Head of caudate nucleus (tissue), 42 donors: ENCODE measurements at regions of chr10 and their contacts with region 1.

Region 1: GRCh38 chr10:97553575-97554031 is 19.0 kb upstream of the ANKRD2 start:
- DNase-seq: peak; percentile 49 to 89 (median 78)

Region 2: GRCh38 chr10:97445722-97446639 is 107.6 kb before region 1 on chr10 and contains the starts of genes EXOSC1 and ZDHHC16:
- intact Hi-C with region 1: loop called (anchors 5 kb)
- DNase-seq: peak; percentile 89 to 98 (median 96)

Region 3: DNA sequence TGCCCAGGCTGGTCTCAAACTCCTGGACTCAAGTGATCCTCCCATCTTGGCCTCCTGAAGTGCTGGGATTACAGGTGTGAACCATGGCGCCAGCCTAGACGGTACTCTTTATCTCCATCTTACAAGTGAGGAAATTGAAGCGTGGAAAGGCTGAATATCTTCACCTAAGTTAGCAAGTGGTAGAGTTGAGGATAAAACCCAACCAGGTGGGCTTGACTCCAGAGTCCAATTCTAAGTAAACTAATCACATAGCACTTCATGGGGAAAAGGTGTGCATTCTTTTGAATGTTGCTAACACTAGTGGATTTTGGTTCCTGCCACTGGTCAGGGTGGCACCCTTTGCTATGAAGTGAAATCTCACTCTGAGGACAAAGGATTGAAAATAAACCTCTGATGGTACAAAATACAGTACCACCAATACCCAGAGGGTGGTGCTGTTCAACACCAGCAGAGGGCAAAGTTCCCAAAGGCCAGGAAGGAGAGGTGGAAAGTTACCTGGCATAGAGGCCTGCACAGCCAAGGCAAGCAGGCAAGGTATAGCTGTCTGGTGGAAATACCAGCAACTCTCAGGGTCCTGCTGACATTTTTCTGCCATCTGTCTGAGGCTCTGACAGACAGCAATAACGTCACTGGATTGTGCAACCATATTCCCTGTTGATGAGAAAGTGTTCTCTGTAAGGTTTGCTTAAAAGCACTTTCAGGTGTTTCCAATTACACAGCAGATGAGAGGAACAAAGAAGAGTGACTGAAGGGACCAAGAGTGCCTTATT is 90.1 kb before region 1 on chr10:
- intact Hi-C with region 1: loop called (anchors 5 kb)
- DNase-seq: peak in 33 of 42 donors; percentile 13 to 82 (median 51)

Region 4: GRCh38 chr10:97499561-97500296 is 53.9 kb before region 1 on chr10:
- intact Hi-C with region 1: loop called (anchors 5 kb)
- DNase-seq: peak in 41 of 42 donors; percentile 25 to 78 (median 52)

Region 5: GRCh38 chr10:97518301-97519043 is 35.1 kb before region 1 on chr10:
- intact Hi-C with region 1: no loop called
- DNase-seq: no peak

Region 6: DNA sequence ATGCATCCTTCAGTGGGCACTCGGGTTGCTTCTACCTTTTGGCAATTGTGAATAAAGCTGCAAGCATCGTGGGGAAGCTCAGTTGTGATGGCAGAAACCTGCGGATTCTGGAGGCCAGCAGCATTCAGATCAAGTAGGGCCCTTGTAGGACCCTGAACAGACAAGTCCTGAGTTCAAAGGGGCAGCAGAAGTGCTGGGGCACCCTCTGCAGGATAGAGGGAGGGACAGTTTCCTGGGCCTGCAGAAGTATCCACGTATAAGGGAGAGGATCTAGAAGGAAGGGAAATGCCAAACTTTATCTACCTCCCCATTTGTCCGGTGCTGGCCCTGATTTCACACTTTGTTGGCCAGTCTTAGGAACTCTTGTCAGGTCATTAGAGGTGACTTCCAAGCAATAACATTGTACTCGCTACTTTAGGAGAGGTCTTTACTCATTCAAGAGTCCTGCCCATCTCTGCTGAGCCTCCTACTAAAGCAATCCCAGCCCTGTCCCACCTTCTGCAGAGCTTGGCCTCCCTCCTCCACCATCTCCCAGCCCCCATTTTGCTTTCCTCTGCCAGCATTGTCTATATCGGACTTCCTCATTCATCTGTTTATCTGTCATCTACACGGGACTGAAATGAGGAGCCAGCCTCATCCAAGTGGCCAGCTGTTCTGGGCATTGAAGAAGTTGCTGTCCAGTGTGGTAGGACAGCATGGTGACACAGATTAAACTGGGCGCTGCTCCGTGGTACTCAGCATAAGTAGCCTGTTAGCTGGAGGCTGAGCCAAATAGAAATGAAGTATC is 554.2 kb after region 1 on chr10:
- intact Hi-C with region 1: no loop called
- DNase-seq: peak in 4 of 42 donors; percentile 18 to 39 (median 20)